Heart left ventricle (tissue), 16 donors: ENCODE measurements at regions of chr18 and their contacts with region 1.

Region 1: DNA sequence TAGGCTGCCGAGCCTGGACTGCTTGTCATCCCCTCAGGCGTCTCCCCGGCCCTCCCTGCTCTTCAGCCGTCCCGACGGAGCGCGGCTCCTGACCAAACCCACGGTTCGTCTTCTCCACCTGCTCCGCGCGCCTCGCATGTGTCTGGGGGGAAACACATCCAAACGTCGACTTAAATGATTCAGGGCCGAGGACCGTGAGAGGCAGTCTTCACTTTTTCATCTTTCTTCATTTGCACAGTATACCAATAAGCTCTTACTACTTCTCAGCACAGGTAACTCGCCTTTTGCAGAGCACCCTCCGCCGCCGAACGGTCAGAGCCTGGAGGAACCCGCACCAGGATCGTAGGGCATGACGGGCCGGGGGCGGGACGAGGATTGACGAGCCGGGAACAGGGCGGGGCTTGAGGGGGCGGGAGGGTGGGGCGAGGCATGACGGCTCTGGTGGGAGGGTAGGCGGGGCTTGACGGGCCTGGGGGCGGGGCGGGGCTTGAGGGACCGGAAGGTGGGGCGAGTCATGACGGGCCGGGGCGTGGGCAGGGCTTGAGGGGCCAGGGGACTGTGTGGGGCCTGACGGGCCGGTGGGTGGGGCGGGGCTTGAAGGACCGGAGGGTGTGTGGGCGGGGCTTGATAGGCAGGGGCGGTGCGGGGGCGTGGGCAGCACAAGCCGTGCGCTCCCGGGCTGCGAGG is at the start of gene SEH1L:
- DNase-seq: peak; percentile 100
- ATAC-seq: peak; percentile 96 to 98 (median 98)
- H3K4me3 ChIP-seq: peak within 1 kb of the TSS; percentile 55 to 93 (median 74)
- H3K27ac ChIP-seq: peak within 1 kb of the TSS; percentile 73 to 100 (median 97)
- H3K4me1 ChIP-seq: peaks cover 0 to 45% (median 19%) of the 10 kb centered on the region in 12 donors
- H3K27me3 ChIP-seq: no peaks in the 10 kb centered on the region
- CTCF ChIP-seq: no peak
- POLR2A ChIP-seq: no peak
- total RNA-seq, gene SEH1L: 12.9 to 28.3 (median 18.5) TPM

Region 2: GRCh38 chr18:12327510-12328178 is 619.9 kb before region 1 on chr18:
- intact Hi-C with region 1: loop called in 1 of 10 experiments (anchors 10 kb)
- DNase-seq: peak; percentile 77 to 91 (median 86)
- ATAC-seq: peak; percentile 61 to 84 (median 79)
- H3K4me3 ChIP-seq: no peak overlapping the region
- H3K27ac ChIP-seq: peak overlapping the region; percentile 15 to 66 (median 48)
- H3K4me1 ChIP-seq: peaks cover 0 to 34% (median 21%) of the 10 kb centered on the region in 12 donors
- H3K27me3 ChIP-seq: no peaks in the 10 kb centered on the region
- CTCF ChIP-seq: peak; percentile 62 to 90 (median 78)
- POLR2A ChIP-seq: no peak

Region 3: DNA sequence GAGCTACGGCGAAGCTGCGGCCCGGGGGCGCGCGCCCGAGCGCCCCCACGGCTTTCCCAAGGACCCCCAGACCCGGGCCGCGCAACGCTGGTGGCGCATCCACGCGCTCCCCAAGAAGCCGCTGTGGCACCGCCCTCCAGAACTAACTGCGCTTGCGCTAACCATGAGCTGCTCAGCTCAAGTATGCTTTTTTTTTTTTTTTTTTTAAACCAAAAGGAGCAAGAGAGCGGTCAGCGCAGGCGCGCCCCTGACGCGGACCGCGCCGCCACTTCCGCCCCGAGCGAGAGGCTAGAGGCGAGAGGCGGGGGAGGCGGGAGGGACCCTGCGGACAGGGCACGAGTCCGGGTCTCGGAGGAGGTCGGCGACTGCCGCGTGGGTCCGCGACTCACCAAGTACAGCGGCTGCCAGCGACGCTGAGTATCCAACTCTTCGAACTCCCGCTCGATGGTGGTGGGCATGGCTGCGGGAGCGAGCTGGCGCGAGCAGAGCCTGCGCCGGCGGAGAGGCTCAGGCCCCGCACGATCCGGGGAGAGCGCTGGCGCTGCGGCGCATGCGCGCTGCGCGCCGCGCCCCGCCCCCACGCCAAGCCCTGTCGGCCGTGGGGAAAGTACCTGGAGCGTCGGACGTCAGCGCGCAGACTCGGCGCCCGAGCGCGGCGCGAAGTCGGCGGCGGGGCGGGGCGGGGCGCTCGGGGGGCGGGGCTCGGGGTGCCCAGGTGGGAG is 63.7 kb before region 1 on chr18 and contains the start of gene PTPN2:
- intact Hi-C with region 1: loop called in 5 of 10 experiments (anchors 5 to 10 kb)
- DNase-seq: peak; percentile 93 to 96 (median 96)
- ATAC-seq: peak; percentile 93 to 97 (median 95)
- H3K4me3 ChIP-seq: peak within 1 kb of the TSS; percentile 60 to 97 (median 78)
- H3K27ac ChIP-seq: peak within 1 kb of the TSS; percentile 99 to 100 (median 100)
- H3K4me1 ChIP-seq: peaks cover 0 to 59% (median 13%) of the 10 kb centered on the region in 12 donors
- H3K27me3 ChIP-seq: no peaks in the 10 kb centered on the region
- CTCF ChIP-seq: no peak
- POLR2A ChIP-seq: peak in 1 of 2 donors; percentile 91
- total RNA-seq, gene PTPN2: 7.5 to 33.1 (median 10.4) TPM

Region 4: GRCh38 chr18:12895014-12895413 is 52.5 kb before region 1 on chr18:
- intact Hi-C with region 1: no loop called
- DNase-seq: no peak
- ATAC-seq: no peak
- H3K4me3 ChIP-seq: no peak overlapping the region
- H3K27ac ChIP-seq: no peak overlapping the region
- H3K4me1 ChIP-seq: peaks cover 0 to 4% (median 0%) of the 10 kb centered on the region in 12 donors
- H3K27me3 ChIP-seq: peaks cover 0 to 20% (median 3%) of the 10 kb centered on the region in 9 donors
- CTCF ChIP-seq: no peak
- POLR2A ChIP-seq: no peak

Region 5: GRCh38 chr18:12990967-12991838 is 43.7 kb after region 1 on chr18 and contains the start of gene CEP192:
- intact Hi-C with region 1: loop called in 4 of 10 experiments (anchors 2 to 5 kb)
- DNase-seq: peak; percentile 97 to 98 (median 98)
- ATAC-seq: peak; percentile 98 to 99 (median 99)
- H3K4me3 ChIP-seq: peak within 1 kb of the TSS; percentile 52 to 97 (median 84)
- H3K27ac ChIP-seq: peak within 1 kb of the TSS; percentile 69 to 95 (median 87)
- H3K4me1 ChIP-seq: peaks cover 0 to 36% (median 15%) of the 10 kb centered on the region in 12 donors
- H3K27me3 ChIP-seq: no peaks in the 10 kb centered on the region
- CTCF ChIP-seq: peak in 4 of 12 donors; percentile 21 to 31 (median 23)
- POLR2A ChIP-seq: peak; percentile 51 to 89
- total RNA-seq, gene CEP192: 21.5 to 36.3 (median 27.5) TPM